ENCODE measurements at regions of chr16 and their contacts with region 1.

Region 1: DNA sequence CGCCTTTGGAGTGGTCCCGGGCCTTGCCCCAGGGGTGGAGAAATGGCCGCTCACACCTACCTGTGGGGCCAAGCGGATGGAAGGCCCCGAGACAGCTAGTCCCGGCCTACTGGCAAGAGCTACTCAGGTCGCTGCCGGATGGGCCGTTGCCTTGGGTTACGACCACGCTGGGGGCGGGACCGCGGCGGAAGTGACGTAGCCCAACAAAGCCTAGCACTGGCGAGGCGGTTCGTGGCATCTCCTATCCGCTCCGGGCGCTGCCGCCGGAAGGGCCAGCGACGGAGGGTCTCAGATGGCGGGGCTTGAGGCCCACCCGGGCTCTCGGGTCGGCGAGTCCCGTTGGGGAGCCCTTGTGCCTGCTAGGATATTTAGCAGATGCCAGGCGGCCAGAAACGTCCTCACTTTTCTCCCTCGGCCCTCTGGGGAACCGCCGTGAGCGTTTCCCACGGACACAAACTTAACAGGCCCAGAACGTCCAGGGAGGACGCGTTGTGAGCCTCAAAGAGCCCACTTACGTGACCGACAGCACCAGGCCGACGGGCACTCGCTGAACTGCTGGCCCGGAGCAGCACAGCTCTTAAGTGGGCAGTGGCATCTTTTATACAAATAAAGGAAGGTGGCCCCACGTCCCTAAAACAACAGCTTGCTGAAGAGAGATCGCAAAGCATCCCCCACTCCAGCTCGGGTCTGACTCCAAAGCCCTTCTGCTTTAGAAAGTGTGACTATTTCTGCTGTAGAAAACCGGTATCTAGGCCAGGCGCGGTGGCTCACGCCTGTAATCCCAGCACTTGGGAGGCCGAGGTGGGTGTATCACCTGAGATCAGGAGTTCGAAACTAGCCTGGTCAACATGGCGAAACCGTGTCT is at the start of gene C16orf46:
- H3K4me3 Mint-ChIP-seq: no peak within 1 kb of the TSS
- H3K27ac Mint-ChIP-seq: no peak within 1 kb of the TSS
- H3K4me1 Mint-ChIP-seq: peaks cover 5% of the 10 kb centered on the region
- H3K27me3 Mint-ChIP-seq: no peaks in the 10 kb centered on the region

Region 2: DNA sequence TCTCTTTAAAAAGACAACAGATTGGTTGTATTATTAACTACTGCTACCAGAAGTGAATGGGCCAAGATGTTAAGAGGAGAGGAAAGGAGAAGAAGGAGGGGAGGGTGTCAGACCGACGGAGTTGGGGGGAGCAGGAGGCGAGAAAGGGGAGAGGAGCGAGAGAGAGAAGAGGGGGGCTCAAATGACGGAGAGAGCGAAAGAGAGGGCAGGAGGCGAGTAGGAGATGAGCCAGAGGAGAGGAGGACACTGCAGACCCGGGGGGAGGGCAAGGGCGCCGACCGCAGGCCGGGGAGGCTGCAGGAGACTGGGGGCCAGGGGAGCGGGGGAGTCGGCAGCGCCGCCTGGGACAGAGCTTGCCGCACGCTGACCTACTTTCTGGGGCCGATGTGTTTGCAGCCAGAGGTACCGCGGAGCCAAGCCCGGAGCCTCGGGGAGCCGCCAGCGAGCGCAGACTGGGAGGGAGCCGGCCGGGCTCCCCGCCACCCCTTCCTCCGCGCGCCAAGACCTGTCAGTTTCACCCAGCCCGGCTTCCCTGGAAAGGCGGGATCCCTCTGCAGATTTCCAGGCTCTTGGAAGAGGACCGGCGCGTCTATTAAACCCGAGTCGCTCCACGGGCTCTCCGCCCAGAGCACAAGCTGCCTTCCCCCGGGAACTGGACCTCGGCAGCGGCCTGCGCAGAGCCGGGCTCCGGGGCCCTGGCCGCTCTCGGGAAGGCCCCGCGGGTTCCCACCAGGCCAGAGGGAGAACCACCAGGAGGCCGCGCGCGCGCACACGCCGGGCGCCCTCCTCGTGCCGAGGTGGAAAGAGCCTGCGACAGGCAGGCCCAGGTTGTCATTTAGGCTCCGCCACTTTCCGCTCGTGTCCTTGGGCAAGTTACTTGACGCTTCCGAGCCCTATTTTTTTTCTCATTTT is 145.3 kb before region 1 on chr16:
- intact Hi-C with region 1: no loop called
- H3K4me3 Mint-ChIP-seq: no peak overlapping the region
- H3K27ac Mint-ChIP-seq: no peak overlapping the region
- H3K4me1 Mint-ChIP-seq: peaks cover 6% of the 10 kb centered on the region
- H3K27me3 Mint-ChIP-seq: peaks cover 54% of the 10 kb centered on the region

Region 3: DNA sequence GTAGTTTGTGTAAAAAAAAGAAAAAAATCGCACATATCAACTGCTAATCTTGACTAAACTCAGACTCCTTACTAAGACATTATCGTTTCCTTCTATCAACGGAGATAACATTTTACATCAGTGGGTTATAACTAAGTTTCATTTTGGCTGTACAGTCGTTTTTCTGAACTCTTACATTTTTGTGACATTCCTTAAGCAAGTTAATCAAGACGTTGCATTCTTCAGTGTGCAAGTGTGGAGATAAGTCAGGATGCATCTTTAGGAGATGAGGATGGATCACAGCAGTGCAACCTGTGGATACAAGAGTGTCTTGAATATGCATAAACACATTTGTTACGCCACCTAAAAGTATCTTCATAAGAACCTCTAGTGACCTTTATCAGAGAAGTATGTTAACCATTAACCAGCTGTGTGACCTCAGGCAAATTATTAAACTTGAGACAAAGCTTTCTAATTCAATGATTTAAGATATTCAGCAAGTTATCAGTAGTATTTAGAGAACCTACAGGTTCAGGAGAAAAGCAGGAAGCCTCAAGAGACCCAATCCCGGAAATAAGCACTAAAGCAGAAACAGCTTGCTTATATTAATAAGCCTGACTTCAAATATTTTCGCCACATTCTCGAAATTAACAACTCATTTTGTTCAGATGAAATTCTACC is 80.0 kb before region 1 on chr16:
- intact Hi-C with region 1: loop called (anchors 2 kb)
- H3K4me3 Mint-ChIP-seq: peak overlapping the region; percentile 66
- H3K27ac Mint-ChIP-seq: peak overlapping the region; percentile 90
- H3K4me1 Mint-ChIP-seq: peaks cover 39% of the 10 kb centered on the region
- H3K27me3 Mint-ChIP-seq: no peaks in the 10 kb centered on the region

Region 4: DNA sequence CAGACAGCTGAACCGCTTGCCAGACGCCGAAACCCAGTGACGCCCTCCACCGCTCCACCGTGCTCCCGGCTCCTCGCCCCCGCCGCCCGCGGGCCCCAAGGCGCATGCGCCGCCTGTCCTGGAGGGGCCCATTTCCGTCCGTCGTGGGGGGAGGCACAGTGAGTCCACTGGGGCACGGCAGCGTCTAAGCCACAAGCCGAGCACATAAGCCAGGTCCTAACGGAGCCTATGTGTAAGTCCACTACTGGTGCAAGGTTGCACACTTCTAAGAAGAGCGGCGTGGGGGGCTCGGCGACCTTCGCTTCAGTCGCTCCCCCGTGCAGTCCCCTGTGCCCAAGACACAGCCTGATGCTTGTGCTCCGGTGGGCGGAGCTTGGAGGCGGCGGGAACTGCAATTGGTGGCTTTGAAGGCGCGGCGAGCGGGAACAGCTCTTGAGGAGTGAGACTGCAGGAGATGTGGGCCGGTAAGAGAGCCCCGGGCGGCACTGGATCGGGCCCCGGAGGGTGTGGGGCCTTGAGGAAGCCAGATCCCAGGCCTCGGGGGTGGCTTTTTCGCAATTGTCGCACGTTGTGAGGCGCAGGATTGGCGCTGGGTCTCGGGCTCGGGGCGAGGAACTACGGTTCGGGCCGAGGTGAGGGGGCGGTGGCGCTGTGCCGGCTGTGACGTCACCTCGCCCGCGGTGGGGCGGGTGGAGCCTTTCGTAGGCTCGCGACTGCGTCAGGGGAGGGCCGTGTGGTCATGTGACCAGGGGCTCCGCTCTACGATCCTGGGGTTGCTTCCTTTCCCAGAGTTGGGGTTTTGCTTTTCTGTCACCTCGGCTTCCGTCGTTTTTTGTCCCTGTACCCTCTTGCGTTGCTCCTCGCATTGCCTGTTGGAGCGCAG is 70.3 kb before region 1 on chr16 and contains the starts of genes CENPN and CMC2:
- intact Hi-C with region 1: loop called (anchors 1 kb)
- H3K4me3 Mint-ChIP-seq: peak within 1 kb of the TSS; percentile 96
- H3K27ac Mint-ChIP-seq: peak within 1 kb of the TSS; percentile 99
- H3K4me1 Mint-ChIP-seq: peaks cover 44% of the 10 kb centered on the region
- H3K27me3 Mint-ChIP-seq: no peaks in the 10 kb centered on the region

Region 5: GRCh38 chr16:81035398-81035974 is 41.8 kb before region 1 on chr16 and contains the start of gene ATMIN:
- intact Hi-C with region 1: loop called (anchors 1 kb)
- H3K4me3 Mint-ChIP-seq: peak within 1 kb of the TSS; percentile 78
- H3K27ac Mint-ChIP-seq: no peak within 1 kb of the TSS
- H3K4me1 Mint-ChIP-seq: peaks cover 40% of the 10 kb centered on the region
- H3K27me3 Mint-ChIP-seq: no peaks in the 10 kb centered on the region

Region 6: GRCh38 chr16:81095953-81096717 is 18.8 kb after region 1 on chr16 and contains the start of gene GCSH:
- intact Hi-C with region 1: loop called (anchors 1 kb)
- H3K4me3 Mint-ChIP-seq: peak within 1 kb of the TSS; percentile 82
- H3K27ac Mint-ChIP-seq: peak within 1 kb of the TSS; percentile 27
- H3K4me1 Mint-ChIP-seq: peaks cover 12% of the 10 kb centered on the region
- H3K27me3 Mint-ChIP-seq: peaks cover 8% of the 10 kb centered on the region

Region 7: GRCh38 chr16:81314603-81315270 is 237.4 kb after region 1 on chr16 and contains the start of gene GAN:
- intact Hi-C with region 1: loop called (anchors 2 kb)
- H3K4me3 Mint-ChIP-seq: peak within 1 kb of the TSS; percentile 89
- H3K27ac Mint-ChIP-seq: peak within 1 kb of the TSS; percentile 79
- H3K4me1 Mint-ChIP-seq: peaks cover 33% of the 10 kb centered on the region
- H3K27me3 Mint-ChIP-seq: no peaks in the 10 kb centered on the region